ENCODE measurements at regions of chr16 and their contacts with region 1.

Region 1: GRCh38 chr16:23556881-23557778 is at the starts of genes EARS2 and UBFD1:
- DNase-seq: peak; percentile 99
- H3K4me3 Mint-ChIP-seq: peak within 1 kb of the TSS; percentile 90
- H3K27ac Mint-ChIP-seq: peak within 1 kb of the TSS; percentile 85
- H3K4me1 Mint-ChIP-seq: peaks cover 41% of the 10 kb centered on the region
- H3K27me3 Mint-ChIP-seq: no peaks in the 10 kb centered on the region
- total RNA-seq, gene EARS2: 21.6 to 23.6 TPM
- total RNA-seq, gene UBFD1: 53.9 to 54.4 TPM

Region 2: DNA sequence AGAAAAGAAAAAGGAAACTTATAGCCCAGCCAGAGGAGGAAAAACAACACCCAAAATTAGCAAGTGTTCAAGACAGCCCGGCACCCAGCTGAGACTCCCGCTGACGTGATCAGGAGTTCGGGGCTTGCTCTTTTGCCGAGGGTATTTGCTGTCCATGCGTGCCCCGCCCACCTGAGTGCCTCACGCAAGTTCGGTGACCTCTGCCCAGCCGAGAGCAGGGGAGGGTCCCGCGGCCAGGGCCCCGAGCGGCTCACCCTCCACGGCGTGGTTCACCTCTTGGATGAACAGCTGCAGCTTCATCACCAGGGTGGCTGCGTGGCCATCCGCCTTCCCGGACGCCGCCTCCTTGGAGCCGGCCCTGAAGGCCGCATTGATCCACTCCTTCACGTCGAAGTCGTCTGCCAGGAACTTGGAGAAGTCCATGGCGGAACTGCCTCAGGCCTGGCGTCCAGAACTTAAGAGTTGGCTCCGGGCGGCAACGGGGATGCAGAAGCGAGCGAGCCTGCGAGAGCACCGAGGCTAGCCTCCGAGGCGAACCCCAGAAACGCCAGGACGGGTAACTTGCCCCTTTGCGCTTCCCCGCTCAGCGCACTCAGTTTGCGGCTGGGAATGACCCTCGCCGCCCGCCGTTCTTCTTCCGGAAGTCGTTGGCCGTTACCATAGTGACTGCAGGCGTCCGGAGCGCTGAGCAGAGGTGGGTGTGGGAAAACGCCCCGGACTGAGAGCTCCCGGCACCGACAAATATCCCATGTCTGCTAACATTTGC is 104.4 kb before region 1 on chr16 and contains the start of gene COG7:
- CTCF ChIA-PET with region 1: interaction called, 3 read pairs
- POLR2A ChIA-PET with region 1: interaction called, 4 read pairs
- intact Hi-C with region 1: loop called (anchors 1 kb)
- DNase-seq: peak; percentile 91
- H3K4me3 Mint-ChIP-seq: peak within 1 kb of the TSS; percentile 91
- H3K27ac Mint-ChIP-seq: peak within 1 kb of the TSS; percentile 52
- H3K4me1 Mint-ChIP-seq: peaks cover 25% of the 10 kb centered on the region
- H3K27me3 Mint-ChIP-seq: no peaks in the 10 kb centered on the region
- total RNA-seq, gene COG7: 17.0 to 18.1 TPM

Region 3: DNA sequence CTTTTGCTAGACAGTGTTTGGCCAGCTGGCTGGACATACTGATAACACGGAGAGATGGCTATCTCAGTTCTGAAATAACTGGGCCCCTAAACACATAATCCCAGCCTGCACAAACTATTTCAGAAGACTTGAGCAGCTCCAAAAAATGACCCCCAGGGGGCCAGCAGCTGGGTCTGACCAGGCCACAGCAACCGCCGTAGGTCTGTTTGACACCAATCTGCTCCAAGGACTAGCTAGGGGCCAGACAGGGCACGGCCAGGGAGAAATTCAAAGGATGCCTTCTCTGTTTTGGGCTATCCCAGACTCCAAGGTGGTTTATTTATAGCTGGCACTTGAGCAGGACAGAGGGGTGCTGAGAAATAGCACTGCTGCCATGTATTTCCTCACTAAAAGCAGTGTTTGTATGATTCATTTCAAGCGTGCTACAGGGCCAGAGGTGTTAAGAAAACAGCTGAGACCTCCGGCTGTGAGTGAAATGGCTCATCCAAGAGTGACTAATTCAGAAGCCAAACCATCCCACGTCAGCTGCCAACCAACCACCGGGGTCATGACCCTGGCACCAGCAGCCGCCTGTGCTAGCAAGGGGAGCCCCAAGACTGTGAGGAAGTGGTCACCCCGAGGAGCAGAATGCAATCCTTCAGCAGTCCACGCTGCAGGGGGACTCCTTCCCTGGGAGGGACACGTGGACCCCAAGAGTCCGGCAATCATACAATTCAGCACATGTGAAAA is 52.5 kb before region 1 on chr16:
- CTCF ChIA-PET with region 1: interaction called, 3 read pairs
- POLR2A ChIA-PET with region 1: interaction called, 3 read pairs
- intact Hi-C with region 1: loop called (anchors 2 kb)
- DNase-seq: peak; percentile 94
- H3K4me3 Mint-ChIP-seq: peak overlapping the region; percentile 65
- H3K27ac Mint-ChIP-seq: peak overlapping the region; percentile 87
- H3K4me1 Mint-ChIP-seq: peaks cover 80% of the 10 kb centered on the region
- H3K27me3 Mint-ChIP-seq: no peaks in the 10 kb centered on the region

Region 4: GRCh38 chr16:23510164-23510914 is 46.8 kb before region 1 on chr16 and contains the start of gene GGA2:
- CTCF ChIA-PET with region 1: interaction called, 3 read pairs
- POLR2A ChIA-PET with region 1: interaction called, 3 read pairs
- intact Hi-C with region 1: loop called (anchors 1 kb)
- DNase-seq: peak; percentile 84
- H3K4me3 Mint-ChIP-seq: peak within 1 kb of the TSS; percentile 84
- H3K27ac Mint-ChIP-seq: peak within 1 kb of the TSS; percentile 83
- H3K4me1 Mint-ChIP-seq: peaks cover 58% of the 10 kb centered on the region
- H3K27me3 Mint-ChIP-seq: no peaks in the 10 kb centered on the region
- total RNA-seq, gene GGA2: 73.3 to 75.1 TPM

Region 5: GRCh38 chr16:23595951-23596720 is 39.0 kb after region 1 on chr16 and contains the start of gene NDUFAB1:
- CTCF ChIA-PET with region 1: interaction called, 13 read pairs
- POLR2A ChIA-PET with region 1: no interaction called
- intact Hi-C with region 1: loop called (anchors 1 kb)
- DNase-seq: peak; percentile 94
- H3K4me3 Mint-ChIP-seq: peak within 1 kb of the TSS; percentile 81
- H3K27ac Mint-ChIP-seq: peak within 1 kb of the TSS; percentile 85
- H3K4me1 Mint-ChIP-seq: peaks cover 35% of the 10 kb centered on the region
- H3K27me3 Mint-ChIP-seq: no peaks in the 10 kb centered on the region
- total RNA-seq, gene NDUFAB1: 152 to 153 TPM

Region 6: GRCh38 chr16:23640931-23641765 is 84.0 kb after region 1 on chr16 and contains the starts of genes DCTN5 and PALB2:
- CTCF ChIA-PET with region 1: interaction called, 3 read pairs
- POLR2A ChIA-PET with region 1: interaction called, 6 read pairs
- intact Hi-C with region 1: loop called (anchors 1 kb)
- DNase-seq: peak; percentile 94
- H3K4me3 Mint-ChIP-seq: peak within 1 kb of the TSS; percentile 99
- H3K27ac Mint-ChIP-seq: peak within 1 kb of the TSS; percentile 94
- H3K4me1 Mint-ChIP-seq: peaks cover 27% of the 10 kb centered on the region
- H3K27me3 Mint-ChIP-seq: no peaks in the 10 kb centered on the region
- total RNA-seq, gene DCTN5: 55.6 to 56.1 TPM
- total RNA-seq, gene PALB2: 20.3 to 20.8 TPM

Region 7: DNA sequence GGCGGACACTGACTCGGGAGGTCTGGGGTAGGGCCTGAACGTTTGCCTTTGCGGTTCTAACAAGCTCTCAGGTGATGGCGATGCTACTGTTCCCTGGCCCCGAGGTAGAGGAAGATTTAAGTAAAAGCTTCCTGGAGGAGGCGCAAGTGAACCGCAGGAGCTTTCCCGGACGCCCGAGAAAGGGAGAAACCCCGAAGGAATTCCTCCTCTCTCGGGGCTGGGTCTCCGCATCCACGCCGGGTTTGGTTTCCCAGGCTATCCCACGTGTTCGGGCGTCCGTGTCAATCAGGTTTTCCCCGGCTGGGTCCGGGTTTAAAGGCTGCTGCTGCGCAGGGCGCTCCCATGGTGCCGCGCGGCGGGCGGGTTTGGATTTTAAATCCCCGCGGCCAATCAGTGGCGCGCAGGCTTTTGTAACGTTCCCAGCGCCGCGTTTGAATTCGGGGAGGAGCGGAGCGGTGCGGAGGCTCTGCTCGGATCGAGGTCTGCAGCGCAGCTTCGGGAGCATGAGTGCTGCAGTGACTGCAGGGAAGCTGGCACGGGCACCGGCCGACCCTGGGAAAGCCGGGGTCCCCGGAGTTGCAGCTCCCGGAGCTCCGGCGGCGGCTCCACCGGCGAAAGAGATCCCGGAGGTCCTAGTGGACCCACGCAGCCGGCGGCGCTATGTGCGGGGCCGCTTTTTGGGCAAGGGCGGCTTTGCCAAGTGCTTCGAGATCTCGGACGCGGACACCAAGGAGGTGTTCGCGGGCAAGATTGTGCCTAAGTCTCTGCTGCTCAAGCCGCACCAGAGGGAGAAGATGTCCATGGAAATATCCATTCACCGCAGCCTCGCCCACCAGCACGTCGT is 121.5 kb after region 1 on chr16 and contains the start of gene PLK1:
- CTCF ChIA-PET with region 1: no interaction called
- POLR2A ChIA-PET with region 1: no interaction called
- intact Hi-C with region 1: loop called (anchors 5 kb)
- DNase-seq: peak; percentile 92
- H3K4me3 Mint-ChIP-seq: peak within 1 kb of the TSS; percentile 92
- H3K27ac Mint-ChIP-seq: peak within 1 kb of the TSS; percentile 33
- H3K4me1 Mint-ChIP-seq: peaks cover 13% of the 10 kb centered on the region
- H3K27me3 Mint-ChIP-seq: no peaks in the 10 kb centered on the region
- total RNA-seq, gene PLK1: 81.2 to 81.6 TPM